IMR-90 (cell line): ENCODE measurements at regions of chr18 and their contacts with region 1.

Region 1: GRCh38 chr18:45212181-45213039 is 402.9 kb upstream of the SLC14A2 start:
- DNase-seq: peak; percentile 74
- ATAC-seq: peak; percentile 95
- H3K4me3 ChIP-seq: no peak overlapping the region
- H3K27ac ChIP-seq: no peak overlapping the region
- H3K4me1 ChIP-seq: no peaks in the 10 kb centered on the region
- H3K27me3 ChIP-seq: peaks cover 2% of the 10 kb centered on the region
- CTCF ChIP-seq: peak; percentile 100
- POLR2A ChIP-seq: 0 out of 2 replicates have a peak, but pooled peaks have one; percentile 37
- RAD21 ChIP-seq: peak; percentile 94

Region 2: GRCh38 chr18:44909191-44909719 is 303.2 kb before region 1 on chr18:
- CTCF ChIA-PET with region 1: no interaction called
- POLR2A ChIA-PET with region 1: no interaction called
- dilution Hi-C with region 1: no loop called
- in situ Hi-C with region 1: no loop called
- intact Hi-C with region 1: loop called (anchors 10 kb)
- DNase-seq: no peak
- ATAC-seq: no peak
- H3K4me3 ChIP-seq: no peak overlapping the region
- H3K27ac ChIP-seq: no peak overlapping the region
- H3K4me1 ChIP-seq: no peaks in the 10 kb centered on the region
- H3K27me3 ChIP-seq: no peaks in the 10 kb centered on the region
- CTCF ChIP-seq: no peak
- POLR2A ChIP-seq: no peak
- RAD21 ChIP-seq: no peak